Colonic mucosa (tissue), 4 donors: ENCODE measurements at regions of chr7 and their contacts with region 1.

Region 1: GRCh38 chr7:101287032-101287431 is 34.6 kb downstream of the IFT22 start:
- DNase-seq: no peak
- H3K4me3 ChIP-seq: no peak overlapping the region
- H3K27ac ChIP-seq: no peak overlapping the region
- H3K4me1 ChIP-seq: no peaks in the 10 kb centered on the region
- H3K27me3 ChIP-seq: no peaks in the 10 kb centered on the region
- CTCF ChIP-seq: no peak

Region 2: DNA sequence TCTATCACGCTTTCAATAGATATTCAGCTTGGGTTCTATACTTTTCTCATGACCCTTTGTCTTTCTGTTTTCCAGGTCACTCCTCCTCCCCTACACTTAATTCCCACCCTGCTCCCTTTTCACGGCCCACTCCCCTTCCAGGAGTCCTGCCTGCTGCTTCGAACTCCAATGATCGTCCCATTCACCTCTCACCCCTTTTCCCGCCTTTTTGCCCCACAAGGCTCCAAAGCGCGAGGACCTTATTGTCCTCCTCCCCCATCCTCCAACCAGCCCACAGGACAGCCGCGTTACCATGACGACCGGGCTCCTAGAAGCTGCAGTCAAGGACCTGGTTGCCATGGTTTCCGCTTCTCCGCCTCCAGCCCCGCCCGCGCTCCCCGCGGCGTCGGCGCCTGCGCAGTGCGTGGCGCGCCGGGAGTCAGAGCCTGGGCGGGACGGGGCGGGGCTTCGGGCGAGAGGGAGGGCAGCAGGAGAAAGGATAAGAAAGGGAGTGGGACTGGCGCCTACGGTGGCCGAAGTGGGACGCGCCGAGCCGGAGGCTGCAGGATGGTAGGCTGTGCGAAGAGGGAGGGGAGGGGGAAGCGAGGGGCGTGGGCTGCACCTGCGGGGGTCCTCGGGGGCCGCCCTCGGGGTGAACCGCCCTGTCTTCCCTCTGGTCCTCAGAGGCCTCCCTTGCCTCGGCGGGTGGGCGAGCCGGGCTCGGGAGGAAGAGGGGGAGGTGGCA is 132.9 kb before region 1 on chr7 and contains the start of gene AP1S1:
- intact Hi-C with region 1: loop called (anchors 5 kb)
- DNase-seq: peak; percentile 96
- H3K4me3 ChIP-seq: peak within 1 kb of the TSS; percentile 95
- H3K27ac ChIP-seq: peak within 1 kb of the TSS; percentile 57
- H3K4me1 ChIP-seq: no peaks in the 10 kb centered on the region
- H3K27me3 ChIP-seq: no peaks in the 10 kb centered on the region
- CTCF ChIP-seq: no peak
- total RNA-seq, gene AP1S1: 111 to 127 TPM

Region 3: DNA sequence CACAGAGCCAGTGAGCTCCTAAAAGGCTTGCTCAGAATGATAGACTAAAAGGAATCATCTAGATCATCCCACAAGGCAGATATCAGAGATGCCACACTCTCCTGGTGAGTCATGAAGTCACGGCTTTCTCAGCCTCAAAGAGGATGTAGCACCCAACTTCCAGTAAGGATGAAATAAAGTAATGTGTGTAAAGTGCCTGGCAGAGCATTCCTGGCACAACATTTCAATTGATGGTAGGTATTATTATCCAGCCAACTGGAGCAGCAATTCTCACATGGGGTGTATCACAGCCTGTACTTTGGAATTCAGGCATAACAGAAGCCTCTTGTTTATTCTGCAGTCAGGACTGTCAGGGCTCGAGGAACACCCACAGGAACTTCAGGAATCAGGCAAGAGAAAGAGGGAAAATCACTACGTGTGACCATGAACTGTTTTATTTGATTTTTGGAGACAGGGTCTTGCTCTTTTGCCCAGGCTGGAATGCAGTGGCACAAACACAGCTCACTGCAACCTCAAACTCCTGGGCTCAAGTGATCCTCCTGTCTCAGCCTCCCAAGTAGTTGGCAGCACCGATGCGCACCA is 101.7 kb before region 1 on chr7:
- intact Hi-C with region 1: loop called (anchors 5 kb)
- DNase-seq: no peak
- H3K4me3 ChIP-seq: no peak overlapping the region
- H3K27ac ChIP-seq: no peak overlapping the region
- H3K4me1 ChIP-seq: peaks cover 5% of the 10 kb centered on the region
- H3K27me3 ChIP-seq: peaks cover 10% of the 10 kb centered on the region
- CTCF ChIP-seq: no peak

Region 4: GRCh38 chr7:101342892-101343291 is 55.9 kb after region 1 on chr7:
- intact Hi-C with region 1: no loop called
- DNase-seq: no peak
- H3K4me3 ChIP-seq: no peak overlapping the region
- H3K27ac ChIP-seq: no peak overlapping the region
- H3K4me1 ChIP-seq: no peaks in the 10 kb centered on the region
- H3K27me3 ChIP-seq: no peaks in the 10 kb centered on the region
- CTCF ChIP-seq: no peak

Region 5: DNA sequence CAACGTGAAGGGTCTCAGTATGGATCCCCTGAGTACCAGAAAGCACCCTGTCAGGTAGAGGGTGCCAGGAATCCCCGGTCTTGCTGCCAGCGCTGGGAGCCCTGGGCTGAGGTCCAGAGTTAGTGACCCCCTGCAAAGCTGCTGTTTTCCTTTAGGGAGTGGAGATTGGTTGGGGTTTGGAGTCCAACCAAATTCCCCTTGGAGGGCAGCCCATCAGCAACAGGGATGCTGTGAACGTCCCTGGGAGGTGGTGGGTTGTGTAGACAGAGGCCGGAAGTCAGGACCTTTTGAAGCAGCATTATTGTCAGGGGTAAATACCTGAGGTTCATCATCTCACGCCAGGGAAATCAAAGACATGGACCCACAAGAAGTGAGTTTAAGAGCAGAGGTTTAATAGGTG is 179.8 kb after region 1 on chr7:
- intact Hi-C with region 1: no loop called
- DNase-seq: no peak
- H3K4me3 ChIP-seq: no peak overlapping the region
- H3K27ac ChIP-seq: no peak overlapping the region
- H3K4me1 ChIP-seq: no peaks in the 10 kb centered on the region
- H3K27me3 ChIP-seq: no peaks in the 10 kb centered on the region
- CTCF ChIP-seq: no peak